Colonic mucosa (tissue), 4 donors: ENCODE measurements at regions of chr2 and their contacts with region 1.

Region 1: GRCh38 chr2:11129598-11130449 is 25.4 kb upstream of the SLC66A3 start:
- DNase-seq: peak; percentile 90
- H3K4me3 ChIP-seq: peak overlapping the region; percentile 20
- H3K27ac ChIP-seq: peak overlapping the region; percentile 45
- H3K4me1 ChIP-seq: peaks cover 10% of the 10 kb centered on the region
- H3K27me3 ChIP-seq: no peaks in the 10 kb centered on the region
- CTCF ChIP-seq: peak; percentile 36

Region 2: DNA sequence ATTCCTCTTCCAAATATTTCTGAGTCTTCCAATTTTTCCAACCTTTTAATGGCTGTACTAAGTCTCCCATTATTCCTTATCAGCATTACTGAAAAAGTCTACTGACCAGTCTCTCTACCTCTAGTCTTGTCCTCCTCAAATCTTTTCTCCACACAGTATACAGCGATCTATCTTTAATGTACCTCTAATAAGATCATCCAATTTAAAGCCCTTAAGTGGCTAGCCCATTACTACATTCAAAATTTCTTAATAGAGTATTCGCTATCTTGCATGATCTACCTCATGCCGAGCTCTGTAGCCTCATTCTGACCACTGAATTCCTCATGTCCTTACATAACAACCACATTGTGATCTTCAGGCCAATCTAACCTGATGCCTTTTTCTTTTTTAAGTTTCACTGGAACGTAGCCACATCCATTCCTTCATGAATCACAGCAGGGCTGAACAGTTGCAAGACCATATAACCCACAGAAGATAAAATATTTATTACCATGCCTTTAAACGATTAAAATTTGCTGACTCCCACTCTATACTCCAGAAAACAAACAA is 83.3 kb after region 1 on chr2:
- intact Hi-C with region 1: loop called (anchors 10 kb)
- DNase-seq: no peak
- H3K4me3 ChIP-seq: no peak overlapping the region
- H3K27ac ChIP-seq: no peak overlapping the region
- H3K4me1 ChIP-seq: no peaks in the 10 kb centered on the region
- H3K27me3 ChIP-seq: no peaks in the 10 kb centered on the region
- CTCF ChIP-seq: no peak

Region 3: GRCh38 chr2:11411768-11412448 is 282.1 kb after region 1 on chr2:
- intact Hi-C with region 1: loop called (anchors 5 kb)
- DNase-seq: peak; percentile 77
- H3K4me3 ChIP-seq: peak overlapping the region; percentile 31
- H3K27ac ChIP-seq: peak overlapping the region; percentile 3
- H3K4me1 ChIP-seq: peaks cover 8% of the 10 kb centered on the region
- H3K27me3 ChIP-seq: no peaks in the 10 kb centered on the region
- CTCF ChIP-seq: peak; percentile 68

Region 4: DNA sequence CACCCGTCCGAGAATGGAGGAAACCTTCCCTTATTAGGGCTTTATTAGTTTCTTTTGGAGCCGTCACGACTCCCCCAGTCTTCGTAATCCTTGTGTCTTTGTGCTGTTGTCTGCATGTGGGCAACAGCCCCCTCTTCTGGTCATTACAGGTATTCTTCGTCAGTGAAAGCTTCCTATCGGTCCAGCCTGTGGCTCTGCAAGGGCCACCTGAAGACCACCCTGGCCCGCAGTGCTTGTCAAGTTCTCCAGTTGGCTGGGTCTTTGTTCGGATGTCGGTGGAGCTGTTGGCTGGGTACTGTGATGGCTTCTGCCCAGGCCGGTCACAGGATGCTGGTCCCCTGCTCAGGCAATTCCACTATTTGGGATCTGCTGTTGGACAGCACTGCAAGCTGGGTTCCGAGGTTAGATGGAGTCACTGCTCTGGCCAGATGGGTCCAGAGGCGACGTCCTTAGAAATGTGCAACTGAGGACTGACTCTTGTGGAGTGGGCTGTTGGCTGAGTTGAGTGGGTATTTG is 317.0 kb after region 1 on chr2:
- intact Hi-C with region 1: loop called (anchors 5 kb)
- DNase-seq: peak; percentile 62
- H3K4me3 ChIP-seq: no peak overlapping the region
- H3K27ac ChIP-seq: no peak overlapping the region
- H3K4me1 ChIP-seq: no peaks in the 10 kb centered on the region
- H3K27me3 ChIP-seq: no peaks in the 10 kb centered on the region
- CTCF ChIP-seq: peak; percentile 76

Region 5: DNA sequence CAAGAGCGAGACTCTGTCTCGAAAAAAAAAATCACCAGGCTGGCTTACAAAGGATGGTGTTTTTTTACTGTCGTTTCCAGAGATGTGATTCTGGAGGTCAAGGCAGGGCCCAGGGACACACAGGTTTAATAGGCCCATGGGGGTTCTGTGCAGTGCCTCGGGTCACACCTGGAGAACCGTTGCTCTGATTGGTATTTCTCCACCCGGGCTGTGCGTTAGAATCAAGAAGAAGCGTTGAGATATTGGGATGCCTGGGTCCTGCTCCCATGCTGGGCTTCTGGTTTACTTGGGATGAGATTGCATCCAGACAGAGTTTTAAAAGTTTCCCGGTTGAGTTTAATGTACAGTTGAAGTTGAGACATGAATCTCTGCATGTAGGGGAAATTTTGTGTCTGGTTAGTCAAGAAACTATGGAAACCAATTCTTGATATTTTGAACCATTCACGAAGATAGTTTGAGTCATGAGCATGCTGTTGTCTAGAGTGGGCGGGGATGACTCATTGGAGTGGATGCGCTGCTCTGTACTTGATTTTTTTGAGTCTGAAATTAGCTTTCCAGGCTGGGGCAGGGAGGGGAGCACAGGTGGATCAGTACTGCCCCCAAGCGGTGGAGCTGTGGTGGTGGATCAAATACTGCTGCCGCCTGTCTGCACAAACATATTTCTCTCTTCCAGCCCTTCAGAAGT is 454.2 kb after region 1 on chr2:
- intact Hi-C with region 1: loop called (anchors 10 kb)
- DNase-seq: peak; percentile 55
- H3K4me3 ChIP-seq: no peak overlapping the region
- H3K27ac ChIP-seq: peak overlapping the region; percentile 22
- H3K4me1 ChIP-seq: no peaks in the 10 kb centered on the region
- H3K27me3 ChIP-seq: no peaks in the 10 kb centered on the region
- CTCF ChIP-seq: peak; percentile 84